Naive thymus-derived CD4-positive, alpha-beta T cell (primary cell): ENCODE measurements at regions of chr6 and their contacts with region 1.

Region 1: DNA sequence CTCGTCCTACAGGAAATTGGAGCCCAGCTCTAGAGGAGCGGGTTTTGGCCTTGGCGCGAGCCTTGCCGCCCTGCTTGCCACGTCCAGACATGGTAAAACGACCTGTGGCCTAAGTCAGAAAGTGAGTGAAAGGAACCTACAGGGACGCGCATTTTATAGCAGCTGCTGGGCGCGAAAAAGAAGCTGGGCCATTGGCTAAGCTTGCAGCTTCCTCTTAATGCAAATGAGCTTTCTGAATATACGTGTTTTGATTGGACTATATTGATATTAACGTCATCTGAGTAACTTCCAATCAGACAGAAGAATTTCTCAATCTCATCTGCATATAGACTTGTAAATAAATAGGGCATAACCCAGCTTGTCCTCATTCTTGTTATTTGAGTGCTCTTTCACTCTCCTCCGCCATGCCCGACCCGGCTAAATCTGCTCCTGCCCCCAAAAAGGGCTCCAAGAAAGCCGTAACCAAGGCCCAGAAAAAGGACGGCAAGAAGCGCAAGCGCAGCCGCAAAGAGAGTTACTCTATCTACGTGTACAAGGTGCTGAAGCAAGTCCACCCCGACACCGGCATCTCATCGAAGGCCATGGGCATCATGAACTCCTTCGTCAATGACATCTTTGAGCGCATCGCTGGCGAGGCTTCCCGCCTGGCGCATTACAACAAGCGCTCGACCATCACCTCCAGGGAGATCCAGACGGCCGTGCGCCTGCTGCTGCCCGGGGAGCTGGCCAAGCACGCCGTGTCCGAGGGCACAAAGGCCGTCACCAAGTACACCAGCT is 18.9 kb downstream of the OR2B2 start:
- DNase-seq: peak; percentile 75 to 95 (median 92)
- ATAC-seq: peak; percentile 83
- H3K4me3 ChIP-seq: peak overlapping the region; percentile 72
- H3K4me3 Mint-ChIP-seq: no peak overlapping the region
- H3K27ac ChIP-seq: peak overlapping the region; percentile 82
- H3K27ac Mint-ChIP-seq: peak overlapping the region in 1 of 9 donors; percentile 97
- H3K4me1 ChIP-seq: peaks cover 4 to 20% of the 10 kb centered on the region in 2 donors
- H3K4me1 Mint-ChIP-seq: peaks cover 9 to 55% (median 30%) of the 10 kb centered on the region in 7 donors
- H3K27me3 ChIP-seq: no peaks in the 10 kb centered on the region
- H3K27me3 Mint-ChIP-seq: peaks cover 0 to 8% (median 0%) of the 10 kb centered on the region in 5 donors

Region 2: GRCh38 chr6:26031595-26032339 is 1861.5 kb before region 1 on chr6:
- CTCF ChIA-PET with region 1: no interaction called
- POLR2A ChIA-PET with region 1: interaction called, 26 read pairs
- intact Hi-C with region 1: loop called (anchors 1 to 5 kb)
- DNase-seq: peak; percentile 56 to 94 (median 90)
- ATAC-seq: peak; percentile 79
- H3K4me3 ChIP-seq: peak overlapping the region; percentile 70
- H3K4me3 Mint-ChIP-seq: peak overlapping the region; percentile 89 to 98 (median 96)
- H3K27ac ChIP-seq: peak overlapping the region; percentile 69
- H3K27ac Mint-ChIP-seq: peak overlapping the region; percentile 93 to 98 (median 96)
- H3K4me1 ChIP-seq: peaks cover 23 to 31% of the 10 kb centered on the region in 2 donors
- H3K4me1 Mint-ChIP-seq: peaks cover 14 to 69% (median 43%) of the 10 kb centered on the region in 7 donors
- H3K27me3 ChIP-seq: no peaks in the 10 kb centered on the region
- H3K27me3 Mint-ChIP-seq: peaks cover 0 to 7% (median 0%) of the 10 kb centered on the region in 5 donors

Region 3: DNA sequence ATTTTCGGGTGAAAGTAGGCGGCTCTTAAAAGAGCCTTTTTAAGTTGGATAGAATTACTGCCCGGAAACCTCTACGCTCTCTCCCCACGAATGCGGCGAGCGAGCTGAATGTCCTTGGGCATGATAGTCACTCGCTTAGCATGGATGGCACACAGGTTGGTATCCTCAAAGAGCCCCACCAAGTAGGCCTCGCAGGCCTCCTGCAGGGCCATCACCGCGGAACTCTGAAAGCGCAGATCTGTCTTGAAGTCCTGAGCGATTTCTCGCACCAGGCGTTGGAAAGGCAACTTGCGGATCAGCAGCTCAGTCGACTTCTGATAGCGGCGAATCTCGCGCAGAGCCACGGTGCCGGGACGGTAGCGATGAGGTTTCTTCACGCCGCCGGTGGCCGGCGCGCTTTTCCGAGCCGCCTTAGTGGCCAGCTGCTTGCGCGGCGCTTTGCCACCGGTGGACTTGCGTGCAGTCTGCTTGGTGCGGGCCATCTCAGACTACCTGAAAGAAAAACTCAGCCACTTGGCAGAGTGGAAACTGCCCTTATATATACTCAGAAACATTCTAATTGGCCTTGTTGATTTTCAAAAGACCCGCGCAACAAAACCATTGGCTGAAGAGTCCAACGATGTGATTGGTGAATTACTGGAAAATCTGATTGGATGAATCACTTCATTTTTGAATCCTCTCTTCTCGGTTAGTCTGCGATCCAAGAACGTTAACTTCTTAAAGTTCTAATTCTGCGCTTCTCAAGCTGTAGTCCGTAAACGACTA is 1622.2 kb before region 1 on chr6:
- CTCF ChIA-PET with region 1: no interaction called
- POLR2A ChIA-PET with region 1: interaction called, 18 read pairs
- intact Hi-C with region 1: loop called in 1 of 2 experiments (anchors 5 kb)
- DNase-seq: peak; percentile 50 to 89 (median 85)
- ATAC-seq: peak; percentile 24
- H3K4me3 ChIP-seq: peak overlapping the region; percentile 83
- H3K4me3 Mint-ChIP-seq: no peak overlapping the region
- H3K27ac ChIP-seq: peak overlapping the region; percentile 82
- H3K27ac Mint-ChIP-seq: peak overlapping the region in 2 of 9 donors; percentile 10 to 91
- H3K4me1 ChIP-seq: peaks cover 6 to 27% of the 10 kb centered on the region in 2 donors
- H3K4me1 Mint-ChIP-seq: peaks cover 0 to 34% (median 15%) of the 10 kb centered on the region in 7 donors
- H3K27me3 ChIP-seq: no peaks in the 10 kb centered on the region
- H3K27me3 Mint-ChIP-seq: no peaks in the 10 kb centered on the region

Region 4: GRCh38 chr6:27138837-27139755 is 754.2 kb before region 1 on chr6:
- CTCF ChIA-PET with region 1: interaction called, 5 read pairs
- POLR2A ChIA-PET with region 1: interaction called, 95 read pairs
- intact Hi-C with region 1: no loop called
- DNase-seq: peak; percentile 39 to 78 (median 67)
- ATAC-seq: peak; percentile 90
- H3K4me3 ChIP-seq: peak overlapping the region; percentile 74
- H3K4me3 Mint-ChIP-seq: peak overlapping the region; percentile 90 to 99 (median 98)
- H3K27ac ChIP-seq: peak overlapping the region; percentile 86
- H3K27ac Mint-ChIP-seq: peak overlapping the region; percentile 97 to 99 (median 98)
- H3K4me1 ChIP-seq: peaks cover 19 to 26% of the 10 kb centered on the region in 2 donors
- H3K4me1 Mint-ChIP-seq: peaks cover 29 to 80% (median 60%) of the 10 kb centered on the region in 7 donors
- H3K27me3 ChIP-seq: no peaks in the 10 kb centered on the region
- H3K27me3 Mint-ChIP-seq: no peaks in the 10 kb centered on the region

Region 5: DNA sequence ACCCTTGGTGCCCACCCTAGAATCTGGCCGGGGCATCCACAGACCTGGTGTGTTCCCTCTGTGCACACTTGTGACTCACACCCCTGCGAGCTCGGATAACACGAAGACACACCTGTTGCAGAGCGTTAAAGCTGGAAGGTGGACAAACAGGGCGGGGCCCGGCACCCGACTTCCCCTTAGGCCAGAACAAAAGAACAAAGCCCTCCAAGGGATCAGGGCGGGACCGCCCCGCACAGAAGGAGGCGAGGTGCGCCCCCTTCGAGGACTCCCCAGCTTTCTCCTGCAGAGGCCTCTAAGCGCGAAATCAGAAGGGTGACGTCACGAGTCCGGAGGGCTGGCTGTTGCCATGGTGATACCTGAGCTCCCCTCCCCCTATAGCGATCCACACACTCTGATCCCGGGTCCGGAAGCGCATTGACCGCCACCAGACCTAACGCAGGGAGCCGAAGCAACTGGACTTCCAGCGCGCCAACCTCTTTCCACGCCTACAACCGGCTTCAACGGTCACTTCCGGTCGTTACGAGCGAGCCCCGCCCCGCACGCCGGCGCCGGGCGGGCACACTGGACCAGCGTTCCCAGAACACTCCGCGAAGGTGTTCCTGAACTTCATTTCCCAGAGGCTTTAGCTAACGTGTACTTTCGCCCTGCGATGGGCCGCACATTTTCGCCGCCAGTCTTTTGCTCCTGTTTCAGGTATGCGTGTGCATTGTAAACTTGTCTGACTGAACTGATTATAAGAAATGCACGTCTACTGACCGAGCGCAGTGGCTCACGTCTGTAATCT is 420.4 kb before region 1 on chr6 and contains the start of gene ZNF184:
- CTCF ChIA-PET with region 1: no interaction called
- POLR2A ChIA-PET with region 1: interaction called, 6 read pairs
- intact Hi-C with region 1: loop called (anchors 1 to 2 kb)
- DNase-seq: peak; percentile 74 to 88 (median 86)
- ATAC-seq: peak; percentile 88
- H3K4me3 ChIP-seq: peak within 1 kb of the TSS; percentile 85
- H3K4me3 Mint-ChIP-seq: peak within 1 kb of the TSS; percentile 85 to 98 (median 97)
- H3K27ac ChIP-seq: peak within 1 kb of the TSS; percentile 93
- H3K27ac Mint-ChIP-seq: peak within 1 kb of the TSS; percentile 90 to 99 (median 96)
- H3K4me1 ChIP-seq: peaks cover 13 to 23% of the 10 kb centered on the region in 2 donors
- H3K4me1 Mint-ChIP-seq: peaks cover 40 to 55% (median 52%) of the 10 kb centered on the region in 7 donors
- H3K27me3 ChIP-seq: no peaks in the 10 kb centered on the region
- H3K27me3 Mint-ChIP-seq: peaks cover 0 to 9% (median 0%) of the 10 kb centered on the region in 5 donors
- total RNA-seq, gene ZNF184: 9.6 to 13.7 (median 12.3) TPM

Region 6: DNA sequence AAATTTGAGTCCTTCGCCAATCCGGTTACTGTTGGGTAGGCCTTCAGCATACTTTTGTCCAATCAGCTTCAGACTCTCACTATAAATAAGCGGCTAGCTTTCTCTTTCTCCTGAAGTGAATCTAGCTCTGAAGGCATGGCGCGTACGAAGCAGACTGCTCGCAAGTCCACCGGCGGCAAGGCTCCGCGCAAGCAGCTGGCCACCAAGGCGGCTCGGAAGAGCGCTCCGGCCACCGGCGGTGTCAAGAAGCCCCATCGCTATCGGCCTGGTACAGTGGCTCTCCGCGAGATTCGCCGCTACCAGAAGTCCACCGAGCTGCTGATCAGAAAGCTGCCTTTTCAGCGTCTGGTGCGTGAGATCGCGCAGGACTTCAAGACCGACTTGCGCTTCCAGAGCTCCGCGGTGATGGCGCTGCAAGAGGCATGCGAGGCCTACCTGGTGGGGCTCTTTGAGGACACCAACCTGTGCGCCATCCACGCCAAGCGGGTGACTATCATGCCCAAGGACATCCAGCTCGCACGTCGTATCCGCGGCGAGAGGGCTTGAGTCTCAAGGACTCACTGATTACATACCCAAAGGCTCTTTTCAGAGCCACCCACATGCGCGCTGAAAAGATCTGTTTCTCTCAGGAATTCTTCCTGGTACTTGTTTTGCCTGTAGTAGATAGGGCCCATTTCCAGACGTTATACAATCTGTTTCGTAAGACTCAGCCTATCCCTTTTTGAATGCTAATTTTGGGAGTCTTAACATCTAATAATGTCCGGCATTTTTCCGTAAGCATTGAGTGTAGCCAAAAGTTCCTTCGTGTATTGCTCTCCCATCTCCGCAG is 83.1 kb before region 1 on chr6:
- CTCF ChIA-PET with region 1: interaction called, 35 read pairs
- POLR2A ChIA-PET with region 1: interaction called, 382 read pairs
- intact Hi-C with region 1: loop called (anchors 1 kb)
- DNase-seq: peak; percentile 66 to 96 (median 92)
- ATAC-seq: peak; percentile 71
- H3K4me3 ChIP-seq: peak overlapping the region; percentile 76
- H3K4me3 Mint-ChIP-seq: peak overlapping the region; percentile 81 to 97 (median 94)
- H3K27ac ChIP-seq: peak overlapping the region; percentile 86
- H3K27ac Mint-ChIP-seq: peak overlapping the region; percentile 95 to 99 (median 98)
- H3K4me1 ChIP-seq: peaks cover 20 to 42% of the 10 kb centered on the region in 2 donors
- H3K4me1 Mint-ChIP-seq: peaks cover 18 to 82% (median 61%) of the 10 kb centered on the region in 7 donors
- H3K27me3 ChIP-seq: no peaks in the 10 kb centered on the region
- H3K27me3 Mint-ChIP-seq: peaks cover 0 to 9% (median 0%) of the 10 kb centered on the region in 5 donors

Region 7: GRCh38 chr6:28863604-28864320 is 970.5 kb after region 1 on chr6:
- CTCF ChIA-PET with region 1: no interaction called
- POLR2A ChIA-PET with region 1: interaction called, 11 read pairs
- intact Hi-C with region 1: loop called (anchors 5 kb)
- DNase-seq: peak; percentile 60 to 93 (median 89)
- ATAC-seq: peak; percentile 64
- H3K4me3 ChIP-seq: peak overlapping the region; percentile 95
- H3K4me3 Mint-ChIP-seq: peak overlapping the region; percentile 90 to 98 (median 92)
- H3K27ac ChIP-seq: peak overlapping the region; percentile 75
- H3K27ac Mint-ChIP-seq: peak overlapping the region; percentile 89 to 100 (median 95)
- H3K4me1 ChIP-seq: peaks cover 11 to 18% of the 10 kb centered on the region in 2 donors
- H3K4me1 Mint-ChIP-seq: peaks cover 15 to 69% (median 53%) of the 10 kb centered on the region in 7 donors
- H3K27me3 ChIP-seq: no peaks in the 10 kb centered on the region
- H3K27me3 Mint-ChIP-seq: peaks cover 0 to 30% (median 4%) of the 10 kb centered on the region in 5 donors